Activated naive CD8-positive, alpha-beta T cell treated with anti-CD3 and anti-CD28 coated beads, Interleukin-2, amount 10 ng/mL, durations not matched to agents 7 days and 5 days (primary cell): ENCODE measurements at regions of chr12 and their contacts with region 1.

Region 1: GRCh38 chr12:56724972-56725722 is at the start of gene NACA:
- DNase-seq: peak; percentile 92
- ATAC-seq: peak; percentile 96
- H3K4me3 Mint-ChIP-seq: peak within 1 kb of the TSS; percentile 97
- H3K27ac Mint-ChIP-seq: peak within 1 kb of the TSS; percentile 94
- H3K4me1 Mint-ChIP-seq: peaks cover 44% of the 10 kb centered on the region
- H3K27me3 Mint-ChIP-seq: no peaks in the 10 kb centered on the region
- total RNA-seq, gene NACA: 878 to 882 TPM

Region 2: GRCh38 chr12:56636675-56637540 is 88.2 kb before region 1 on chr12:
- POLR2A ChIA-PET with region 1: interaction called, 14 read pairs
- DNase-seq: peak; percentile 92
- ATAC-seq: peak; percentile 65
- H3K4me3 Mint-ChIP-seq: peak overlapping the region; percentile 97
- H3K27ac Mint-ChIP-seq: peak overlapping the region; percentile 95
- H3K4me1 Mint-ChIP-seq: peaks cover 53% of the 10 kb centered on the region
- H3K27me3 Mint-ChIP-seq: no peaks in the 10 kb centered on the region

Region 3: GRCh38 chr12:56645717-56646446 is 79.3 kb before region 1 on chr12 and contains the start of gene ATP5F1B:
- POLR2A ChIA-PET with region 1: interaction called, 17 read pairs
- DNase-seq: peak; percentile 85
- ATAC-seq: peak; percentile 99
- H3K4me3 Mint-ChIP-seq: peak within 1 kb of the TSS; percentile 96
- H3K27ac Mint-ChIP-seq: peak within 1 kb of the TSS; percentile 99
- H3K4me1 Mint-ChIP-seq: peaks cover 28% of the 10 kb centered on the region
- H3K27me3 Mint-ChIP-seq: no peaks in the 10 kb centered on the region
- total RNA-seq, gene ATP5F1B: 468 to 471 TPM

Region 4: GRCh38 chr12:56751712-56752598 is 26.8 kb after region 1 on chr12 and contains the start of gene PRIM1:
- POLR2A ChIA-PET with region 1: interaction called, 25 read pairs
- DNase-seq: peak; percentile 92
- ATAC-seq: peak; percentile 91
- H3K4me3 Mint-ChIP-seq: peak within 1 kb of the TSS; percentile 95
- H3K27ac Mint-ChIP-seq: peak within 1 kb of the TSS; percentile 96
- H3K4me1 Mint-ChIP-seq: peaks cover 34% of the 10 kb centered on the region
- H3K27me3 Mint-ChIP-seq: no peaks in the 10 kb centered on the region
- total RNA-seq, gene PRIM1: 52.5 to 56.1 TPM